Activated CD4-positive, alpha-beta memory T cell treated with anti-CD3 and anti-CD28 coated beads for 36 hours (primary cell): ENCODE measurements at regions of chr20 and their contacts with region 1.

Region 1: GRCh38 chr20:739736-740135 is 28.6 kb downstream of the SLC52A3 start:
- DNase-seq: no peak
- H3K4me3 Mint-ChIP-seq: no peak overlapping the region
- H3K27ac Mint-ChIP-seq: no peak overlapping the region
- H3K4me1 Mint-ChIP-seq: no peaks in the 10 kb centered on the region
- H3K27me3 Mint-ChIP-seq: peaks cover 22% of the 10 kb centered on the region

Region 2: DNA sequence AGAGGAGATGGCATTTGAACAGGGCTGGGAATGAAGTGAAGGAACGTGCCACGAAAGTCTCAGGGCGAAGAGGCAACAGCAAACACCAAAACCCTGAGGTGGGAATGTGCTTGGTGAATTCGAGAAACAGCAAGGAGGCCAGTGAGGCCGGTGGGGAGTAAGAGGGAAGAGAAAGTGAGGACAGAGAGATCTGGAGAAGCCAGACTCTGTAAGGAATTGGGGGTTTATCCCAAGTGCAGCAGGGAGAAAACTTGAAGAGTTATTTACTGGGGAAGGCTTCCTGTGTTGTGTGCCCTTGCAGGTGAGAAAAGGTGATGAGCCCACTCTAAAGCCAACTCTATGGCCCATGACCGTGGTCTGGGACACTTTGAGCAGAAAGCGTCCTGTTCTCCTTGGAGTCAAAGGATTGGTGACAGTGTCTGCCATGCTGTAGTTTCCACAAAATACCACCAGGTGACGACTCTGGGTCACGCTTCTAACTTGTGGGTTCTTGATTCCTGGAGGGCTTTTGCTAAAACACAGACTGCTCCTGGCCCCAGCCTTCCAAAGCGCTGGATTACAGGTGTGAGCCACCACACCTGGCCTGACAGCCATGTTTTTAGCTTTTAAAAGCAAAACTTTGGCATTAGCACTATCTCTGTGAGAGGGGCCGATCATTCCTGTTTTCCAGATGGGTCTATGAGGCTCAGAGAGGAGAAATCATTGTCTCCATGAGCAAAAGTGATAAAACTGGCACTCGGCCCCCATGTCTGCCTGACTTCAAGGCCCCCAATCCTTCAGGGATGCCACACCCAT is 178.1 kb before region 1 on chr20:
- CTCF ChIA-PET with region 1: interaction called, 21 read pairs
- POLR2A ChIA-PET with region 1: no interaction called
- intact Hi-C with region 1: no loop called
- DNase-seq: peak; percentile 74
- H3K4me3 Mint-ChIP-seq: no peak overlapping the region
- H3K27ac Mint-ChIP-seq: no peak overlapping the region
- H3K4me1 Mint-ChIP-seq: no peaks in the 10 kb centered on the region
- H3K27me3 Mint-ChIP-seq: peaks cover 13% of the 10 kb centered on the region

Region 3: GRCh38 chr20:573414-574296 is 166.1 kb before region 1 on chr20:
- CTCF ChIA-PET with region 1: no interaction called
- POLR2A ChIA-PET with region 1: no interaction called
- intact Hi-C with region 1: no loop called
- DNase-seq: no peak
- H3K4me3 Mint-ChIP-seq: no peak overlapping the region
- H3K27ac Mint-ChIP-seq: no peak overlapping the region
- H3K4me1 Mint-ChIP-seq: no peaks in the 10 kb centered on the region
- H3K27me3 Mint-ChIP-seq: peaks cover 31% of the 10 kb centered on the region

Region 4: GRCh38 chr20:653110-653589 is 86.6 kb before region 1 on chr20 and contains the start of gene SRXN1:
- CTCF ChIA-PET with region 1: interaction called, 11 read pairs
- POLR2A ChIA-PET with region 1: no interaction called
- intact Hi-C with region 1: no loop called
- DNase-seq: peak; percentile 90
- H3K4me3 Mint-ChIP-seq: peak within 1 kb of the TSS; percentile 81
- H3K27ac Mint-ChIP-seq: peak within 1 kb of the TSS; percentile 70
- H3K4me1 Mint-ChIP-seq: peaks cover 26% of the 10 kb centered on the region
- H3K27me3 Mint-ChIP-seq: peaks cover 3% of the 10 kb centered on the region
- total RNA-seq, gene SRXN1: 13.3 to 14.1 TPM

Region 5: DNA sequence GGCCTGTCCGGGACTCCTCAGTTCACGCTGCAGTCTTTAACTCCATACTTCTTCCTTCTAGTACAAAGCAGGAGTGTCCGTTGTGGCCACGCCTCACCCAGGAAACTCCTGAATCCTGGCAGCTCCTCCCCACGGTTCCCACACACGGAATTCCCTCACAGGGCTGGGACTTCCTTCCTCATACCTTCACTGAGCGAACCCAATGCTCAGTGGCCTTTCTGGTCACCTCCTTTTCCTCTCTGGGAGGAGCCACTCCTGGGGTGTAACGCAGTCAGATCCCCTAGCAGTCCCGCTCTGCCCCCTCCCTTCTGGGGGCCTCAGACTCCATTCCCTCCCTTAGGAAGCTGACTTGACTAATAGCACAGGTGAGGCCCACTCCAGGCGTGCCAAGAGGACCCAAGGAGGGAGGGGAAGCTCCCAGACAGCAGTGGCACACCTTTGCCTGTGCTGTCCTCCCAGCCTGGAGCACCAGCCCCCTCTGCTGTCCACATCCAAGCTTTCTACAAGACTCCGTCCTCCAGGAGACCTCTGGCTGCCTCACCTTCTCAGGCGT is 28.8 kb after region 1 on chr20 and contains the start of gene SLC52A3:
- CTCF ChIA-PET with region 1: interaction called, 10 read pairs
- POLR2A ChIA-PET with region 1: no interaction called
- intact Hi-C with region 1: no loop called
- DNase-seq: peak; percentile 17
- H3K4me3 Mint-ChIP-seq: no peak within 1 kb of the TSS
- H3K27ac Mint-ChIP-seq: no peak within 1 kb of the TSS
- H3K4me1 Mint-ChIP-seq: no peaks in the 10 kb centered on the region
- H3K27me3 Mint-ChIP-seq: peaks cover 18% of the 10 kb centered on the region
- total RNA-seq, gene SLC52A3: not detected